ENCODE measurements at regions of chr2 and their contacts with region 1.

Region 1: DNA sequence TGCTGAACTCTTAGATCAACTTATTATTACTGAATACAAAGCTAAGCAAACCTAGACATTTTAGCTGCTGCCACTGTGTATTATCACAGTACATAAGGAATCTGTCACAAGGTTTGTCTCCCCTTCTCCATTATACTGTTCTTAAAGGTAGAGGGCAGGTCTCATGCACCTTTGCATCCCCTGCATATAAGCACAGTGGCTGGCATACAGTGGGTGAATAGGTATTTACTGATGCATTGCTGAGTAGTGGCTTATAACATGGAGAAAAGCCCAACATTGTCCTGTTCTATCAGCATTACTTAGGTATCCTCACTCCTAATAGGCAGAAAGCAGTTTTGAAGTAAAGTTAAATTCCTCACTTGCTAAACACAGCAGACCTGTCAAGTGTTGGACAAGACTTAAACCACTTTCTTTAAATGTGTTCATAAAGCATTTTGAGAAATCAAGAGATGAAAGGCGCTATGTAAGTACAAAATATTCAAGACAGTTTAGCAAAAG is 43.6 kb downstream of the SF3B1 start:
- DNase-seq: no peak
- H3K4me3 Mint-ChIP-seq: no peak overlapping the region
- H3K27ac Mint-ChIP-seq: no peak overlapping the region
- H3K4me1 Mint-ChIP-seq: peaks cover 5% of the 10 kb centered on the region
- H3K27me3 Mint-ChIP-seq: no peaks in the 10 kb centered on the region

Region 2: DNA sequence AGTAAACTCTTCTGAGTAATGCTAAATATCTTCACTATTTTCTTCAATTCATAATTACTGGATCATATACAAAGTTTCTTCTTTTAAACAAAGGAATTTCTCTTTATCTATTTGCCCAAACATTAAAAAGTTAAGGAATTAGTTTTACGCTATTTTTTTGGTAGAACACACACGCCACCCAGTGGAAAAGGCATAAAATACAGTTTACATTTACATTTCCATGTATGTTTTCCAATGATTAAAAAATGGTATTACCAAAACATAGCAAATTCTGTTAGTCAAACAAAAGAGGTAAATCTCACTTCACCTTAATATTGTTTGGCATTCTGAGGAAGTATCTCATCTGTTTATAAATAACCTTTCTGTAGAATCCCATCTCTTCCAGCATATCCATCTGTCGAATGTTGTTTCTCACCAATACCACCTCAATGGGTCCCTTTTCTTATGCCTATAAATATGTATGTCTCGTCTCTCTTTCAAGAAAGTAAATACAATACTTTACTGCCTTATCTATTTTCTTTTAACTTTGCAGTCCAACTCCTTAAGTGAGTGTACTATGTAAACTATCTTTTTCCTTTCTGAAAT is 386.6 kb after region 1 on chr2:
- intact Hi-C with region 1: loop called (anchors 2 kb)
- DNase-seq: no peak
- H3K4me3 Mint-ChIP-seq: no peak overlapping the region
- H3K27ac Mint-ChIP-seq: no peak overlapping the region
- H3K4me1 Mint-ChIP-seq: peaks cover 4% of the 10 kb centered on the region
- H3K27me3 Mint-ChIP-seq: peaks cover 17% of the 10 kb centered on the region

Measured in activated T-helper 2 cell treated with anti-CD3 and anti-CD28 coated beads, Interferon-gamma antibody, Interleukin-2, Interleukin-4, amounts not matched to agents 10 μg/mL and 5 μg/mL and 100 μg/mL, durations not matched to agents 14 hours and 24 hours and 36 hours (primary cell).